ENCODE measurements at regions of chr1 and their contacts with region 1.

Region 1: GRCh38 chr1:15885701-15886610 is 38.4 kb downstream of the SPEN start:
- DNase-seq: peak; percentile 89 to 98 (median 96)

Region 2: DNA sequence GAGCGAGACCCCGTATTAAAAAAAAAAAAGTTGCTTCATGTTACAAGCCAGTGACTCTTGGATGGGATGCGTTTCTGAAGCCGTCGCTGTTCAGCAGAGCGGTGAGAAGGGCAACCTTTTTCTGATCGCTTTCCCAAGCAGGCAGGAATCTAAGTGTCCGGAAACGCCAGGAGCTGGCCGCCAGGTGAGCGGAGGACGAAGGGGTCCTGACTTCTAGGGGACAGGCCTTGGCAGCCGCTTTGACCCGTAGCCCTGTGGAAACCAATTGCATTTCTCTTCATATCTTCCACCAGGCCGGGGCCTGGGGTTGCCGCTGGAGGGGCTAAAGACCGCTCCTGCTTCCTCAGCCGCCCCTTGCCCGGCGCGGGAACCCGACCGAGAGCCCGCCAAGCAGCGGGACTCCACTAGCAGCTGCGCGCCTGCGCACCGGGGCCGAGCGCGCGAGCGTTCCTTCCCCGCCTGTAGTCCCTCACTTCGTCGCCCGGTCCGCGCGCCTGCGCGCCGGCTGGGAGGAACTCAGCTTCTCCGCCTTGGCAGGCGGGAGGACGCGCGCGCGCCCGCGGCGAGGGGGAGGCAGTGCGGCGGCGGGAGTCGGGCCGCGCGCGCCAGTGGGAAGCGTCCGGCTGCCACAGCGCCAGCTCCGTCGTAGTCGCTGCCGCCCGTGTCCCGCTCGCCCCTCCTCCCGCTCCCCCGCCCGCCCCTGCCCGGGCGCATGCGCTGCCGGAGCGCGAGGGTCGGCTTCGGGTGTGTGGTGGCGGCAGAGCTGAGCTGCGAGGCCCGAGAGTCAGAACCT is 38.7 kb before region 1 on chr1 and contains the start of gene SPEN:
- intact Hi-C with region 1: loop called (anchors 5 kb)
- DNase-seq: peak; percentile 90 to 99 (median 98)

Region 3: GRCh38 chr1:16474166-16474800 is 588.3 kb after region 1 on chr1:
- intact Hi-C with region 1: no loop called
- DNase-seq: peak in 1 of 42 donors; percentile 9

Measured in head of caudate nucleus (tissue), 42 donors.